Heart left ventricle (tissue), 16 donors: ENCODE measurements at regions of chr2 and their contacts with region 1.

Region 1: GRCh38 chr2:240913810-240914644 is 7.9 kb downstream of the CROCC2 start:
- DNase-seq: peak; percentile 79 to 87 (median 85)
- ATAC-seq: peak; percentile 70 to 88 (median 74)
- H3K4me3 ChIP-seq: peak overlapping the region in 3 of 12 donors; percentile 0 to 14 (median 6)
- H3K27ac ChIP-seq: peak overlapping the region in 11 of 12 donors; percentile 12 to 81 (median 38)
- H3K4me1 ChIP-seq: peaks cover 3 to 45% (median 25%) of the 10 kb centered on the region in 12 donors
- H3K27me3 ChIP-seq: peaks cover 0 to 30% (median 14%) of the 10 kb centered on the region in 9 donors
- CTCF ChIP-seq: peak; percentile 86 to 95 (median 90)
- POLR2A ChIP-seq: no peak

Region 2: GRCh38 chr2:240991373-240992263 is 77.6 kb after region 1 on chr2:
- intact Hi-C with region 1: loop called in 7 of 10 experiments (anchors 2 to 10 kb)
- DNase-seq: peak; percentile 70 to 93 (median 86)
- ATAC-seq: peak; percentile 77 to 89 (median 84)
- H3K4me3 ChIP-seq: no peak overlapping the region
- H3K27ac ChIP-seq: peak overlapping the region in 11 of 12 donors; percentile 30 to 77 (median 58)
- H3K4me1 ChIP-seq: peaks cover 0 to 55% (median 28%) of the 10 kb centered on the region in 12 donors
- H3K27me3 ChIP-seq: no peaks in the 10 kb centered on the region
- CTCF ChIP-seq: no peak
- POLR2A ChIP-seq: peak in 1 of 2 donors; percentile 15

Region 3: GRCh38 chr2:240998120-240998994 is 84.3 kb after region 1 on chr2 and contains the start of gene SNED1:
- intact Hi-C with region 1: loop called in 3 of 10 experiments (anchors 5 to 10 kb)
- DNase-seq: peak; percentile 91 to 95 (median 91)
- ATAC-seq: peak; percentile 84 to 92 (median 87)
- H3K4me3 ChIP-seq: peak within 1 kb of the TSS; percentile 46 to 94 (median 68)
- H3K27ac ChIP-seq: peak within 1 kb of the TSS; percentile 2 to 90 (median 76)
- H3K4me1 ChIP-seq: peaks cover 0 to 47% (median 27%) of the 10 kb centered on the region in 12 donors
- H3K27me3 ChIP-seq: peaks cover 0 to 4% (median 0%) of the 10 kb centered on the region in 9 donors
- CTCF ChIP-seq: no peak
- POLR2A ChIP-seq: peak in 1 of 2 donors; percentile 61
- total RNA-seq, gene SNED1: 3.1 to 14.7 (median 5.6) TPM